ENCODE measurements at regions of chr7 and their contacts with region 1.

Region 1: DNA sequence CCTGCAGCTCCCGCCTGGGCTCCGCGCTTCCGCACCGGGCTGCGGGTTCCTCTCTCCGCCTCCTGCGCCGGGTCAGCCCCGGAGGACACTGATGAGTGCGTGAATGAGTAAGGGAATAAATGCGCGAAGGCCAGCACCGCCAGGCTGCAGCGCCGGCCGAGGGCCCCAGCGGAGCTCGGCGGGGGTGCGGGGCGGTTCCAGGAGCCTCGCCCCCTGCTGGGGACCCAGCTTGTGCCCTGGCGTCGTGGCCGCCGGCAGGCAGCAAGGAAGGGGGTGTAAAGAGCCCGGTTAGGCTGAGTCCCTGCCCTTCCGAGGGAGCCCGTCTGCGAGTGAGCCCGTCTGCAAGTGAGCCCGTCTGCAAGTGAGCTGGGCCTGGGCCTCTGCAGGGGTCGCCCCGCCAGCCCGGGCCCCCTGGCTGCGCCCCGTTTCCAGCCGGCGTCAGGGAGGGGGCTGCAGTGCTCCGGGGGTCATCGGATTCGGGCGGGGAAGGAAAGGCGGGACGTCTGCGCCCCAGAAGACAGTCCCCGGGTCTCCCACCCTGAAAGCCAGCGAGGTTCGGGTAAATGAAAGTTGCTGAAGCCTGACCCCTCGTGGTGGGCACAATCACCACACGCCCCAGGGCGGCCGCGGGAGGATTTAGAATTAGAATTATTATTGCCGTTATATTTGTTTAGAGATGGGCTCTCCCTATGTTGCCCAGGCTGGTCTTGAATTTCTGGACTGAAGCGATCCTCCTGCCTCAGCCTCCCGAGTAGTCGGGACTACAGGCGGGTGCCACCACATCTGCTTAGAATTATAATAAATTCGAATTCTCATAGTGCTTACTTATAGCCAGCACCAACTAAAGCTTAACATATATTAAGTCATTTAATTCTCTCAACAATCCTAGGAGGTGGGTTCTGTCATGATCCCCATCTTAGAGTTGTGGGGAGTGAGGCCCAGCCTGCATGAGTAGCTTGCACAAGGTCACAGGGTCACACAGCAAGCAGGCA is 8.6 kb upstream of the CRYGN start:
- DNase-seq: peak; percentile 65
- H3K4me3 ChIP-seq: peak overlapping the region; percentile 72
- H3K27ac ChIP-seq: peak overlapping the region; percentile 46
- H3K4me1 ChIP-seq: peaks cover 10% of the 10 kb centered on the region
- H3K27me3 ChIP-seq: no peaks in the 10 kb centered on the region
- CTCF ChIP-seq: peak; percentile 87

Region 2: DNA sequence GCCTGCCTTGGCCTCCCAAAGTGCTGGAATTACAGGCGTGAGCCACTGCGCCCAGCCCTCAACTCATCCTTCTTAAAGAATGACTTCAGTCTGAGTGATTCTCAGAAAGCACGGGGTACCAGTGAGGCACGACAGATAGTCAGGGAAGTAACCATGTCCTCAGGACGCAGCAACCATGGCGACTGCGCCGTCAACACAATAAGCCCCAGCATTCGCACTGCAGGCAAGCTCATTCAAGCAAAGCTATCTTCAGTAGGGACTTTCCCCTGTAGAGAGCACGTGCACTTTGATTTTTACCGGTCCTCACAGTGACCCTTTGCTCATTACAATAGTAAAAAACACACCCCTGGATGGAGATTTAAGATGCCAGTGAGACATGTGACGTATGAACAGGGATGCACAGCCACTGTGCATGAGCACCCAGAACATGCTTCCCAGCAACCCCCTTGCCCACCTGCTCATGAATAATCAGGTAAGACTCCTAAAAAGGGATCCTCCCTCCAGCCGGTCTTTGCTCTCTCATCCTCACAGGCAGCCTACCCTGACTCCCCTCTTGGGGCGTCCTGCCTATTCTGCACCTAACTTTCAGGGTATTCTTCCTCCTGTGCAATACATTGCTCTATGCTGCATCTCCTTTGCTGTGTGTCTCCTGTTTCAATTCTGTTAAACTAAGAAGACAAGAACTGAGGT is 47.8 kb before region 1 on chr7:
- intact Hi-C with region 1: no loop called
- DNase-seq: no peak
- H3K4me3 ChIP-seq: no peak overlapping the region
- H3K27ac ChIP-seq: no peak overlapping the region
- H3K4me1 ChIP-seq: no peaks in the 10 kb centered on the region
- H3K27me3 ChIP-seq: peaks cover 18% of the 10 kb centered on the region
- CTCF ChIP-seq: no peak

Region 3: GRCh38 chr7:151759591-151760042 is 311.1 kb after region 1 on chr7:
- intact Hi-C with region 1: loop called (anchors 5 kb)
- DNase-seq: peak; percentile 43
- H3K4me3 ChIP-seq: no peak overlapping the region
- H3K27ac ChIP-seq: no peak overlapping the region
- H3K4me1 ChIP-seq: peaks cover 38% of the 10 kb centered on the region
- H3K27me3 ChIP-seq: no peaks in the 10 kb centered on the region
- CTCF ChIP-seq: peak; percentile 93

Measured in left ventricle myocardium inferior (tissue), 1 donor.